Left ventricle myocardium inferior (tissue), 1 donor: ENCODE measurements at regions of chr2 and their contacts with region 1.

Region 1: GRCh38 chr2:42865884-42866881 is 73.8 kb upstream of the HAAO start:
- DNase-seq: peak; percentile 66
- H3K4me3 ChIP-seq: no peak overlapping the region
- H3K27ac ChIP-seq: peak overlapping the region; percentile 91
- H3K4me1 ChIP-seq: peaks cover 36% of the 10 kb centered on the region
- H3K27me3 ChIP-seq: no peaks in the 10 kb centered on the region
- CTCF ChIP-seq: no peak

Region 2: DNA sequence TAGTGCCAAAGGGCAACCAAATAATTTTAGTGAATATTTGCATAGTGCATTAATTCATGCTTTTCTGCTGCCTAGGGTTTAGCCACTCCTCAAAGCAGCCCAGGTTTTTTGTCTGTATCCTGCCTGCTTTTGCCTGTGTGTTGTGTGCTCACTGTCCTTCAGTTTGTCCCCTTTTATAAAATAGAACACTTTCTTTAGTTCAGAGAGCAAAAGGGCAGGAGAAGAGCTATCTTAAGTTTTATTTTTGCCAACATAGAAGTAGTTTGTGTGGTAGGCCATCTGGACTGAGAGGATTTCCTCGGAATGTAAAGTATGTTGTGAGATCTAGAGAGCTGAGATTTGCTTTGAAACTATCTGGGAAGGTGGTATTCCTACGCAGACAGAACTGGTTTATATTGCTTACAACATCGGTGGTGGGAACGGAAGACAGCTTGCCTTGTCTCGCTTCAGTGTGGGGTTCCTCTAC is 632.2 kb before region 1 on chr2:
- intact Hi-C with region 1: no loop called
- DNase-seq: no peak
- H3K4me3 ChIP-seq: no peak overlapping the region
- H3K27ac ChIP-seq: no peak overlapping the region
- H3K4me1 ChIP-seq: peaks cover 6% of the 10 kb centered on the region
- H3K27me3 ChIP-seq: no peaks in the 10 kb centered on the region
- CTCF ChIP-seq: no peak

Region 3: GRCh38 chr2:42928692-42929545 is 62.7 kb after region 1 on chr2:
- intact Hi-C with region 1: loop called (anchors 10 kb)
- DNase-seq: no peak
- H3K4me3 ChIP-seq: no peak overlapping the region
- H3K27ac ChIP-seq: peak overlapping the region; percentile 92
- H3K4me1 ChIP-seq: peaks cover 100% of the 10 kb centered on the region
- H3K27me3 ChIP-seq: no peaks in the 10 kb centered on the region
- CTCF ChIP-seq: peak; percentile 47

Region 4: DNA sequence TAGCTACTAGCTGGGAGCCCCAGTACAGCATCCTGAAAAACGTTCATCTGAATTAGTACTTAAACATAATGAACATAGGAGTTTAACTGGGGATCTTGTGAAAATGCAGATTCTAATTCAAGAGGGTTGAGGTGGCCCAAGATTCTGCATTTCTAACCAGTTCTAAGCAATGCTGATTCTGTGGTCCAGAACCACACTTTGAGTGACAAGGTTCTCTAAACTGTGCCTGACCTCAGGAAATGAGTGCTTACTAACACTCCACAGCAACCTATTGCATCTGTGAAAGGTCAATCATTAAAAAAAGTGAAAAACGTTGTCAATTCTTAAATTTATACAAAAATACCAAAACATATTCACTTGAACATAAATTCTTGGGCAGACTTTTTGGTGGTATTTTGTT is 517.4 kb after region 1 on chr2:
- intact Hi-C with region 1: no loop called
- DNase-seq: no peak
- H3K4me3 ChIP-seq: no peak overlapping the region
- H3K27ac ChIP-seq: no peak overlapping the region
- H3K4me1 ChIP-seq: peaks cover 14% of the 10 kb centered on the region
- H3K27me3 ChIP-seq: no peaks in the 10 kb centered on the region
- CTCF ChIP-seq: no peak